Activated CD4-positive, alpha-beta memory T cell treated with anti-CD3 and anti-CD28 coated beads, Interleukin-2, amount 10 ng/mL, durations not matched to agents 7 days and 5 days (primary cell): ENCODE measurements at regions of chr10 and their contacts with region 1.

Region 1: GRCh38 chr10:128125944-128126764 is at the start of gene MKI67:
- DNase-seq: peak; percentile 94
- H3K4me3 Mint-ChIP-seq: peak within 1 kb of the TSS; percentile 99
- H3K27ac Mint-ChIP-seq: peak within 1 kb of the TSS; percentile 94
- H3K4me1 Mint-ChIP-seq: peaks cover 40% of the 10 kb centered on the region
- H3K27me3 Mint-ChIP-seq: peaks cover 11% of the 10 kb centered on the region
- total RNA-seq, gene MKI67: 253 to 272 TPM

Region 2: GRCh38 chr10:128047351-128047750 is 78.8 kb before region 1 on chr10:
- CTCF ChIA-PET with region 1: no interaction called
- POLR2A ChIA-PET with region 1: interaction called, 36 read pairs
- DNase-seq: peak; percentile 89
- H3K4me3 Mint-ChIP-seq: peak overlapping the region; percentile 93
- H3K27ac Mint-ChIP-seq: peak overlapping the region; percentile 100
- H3K4me1 Mint-ChIP-seq: peaks cover 63% of the 10 kb centered on the region
- H3K27me3 Mint-ChIP-seq: no peaks in the 10 kb centered on the region

Region 3: GRCh38 chr10:128095027-128095752 is 31.0 kb before region 1 on chr10:
- CTCF ChIA-PET with region 1: interaction called, 3 read pairs
- POLR2A ChIA-PET with region 1: interaction called, 41 read pairs
- DNase-seq: peak; percentile 65
- H3K4me3 Mint-ChIP-seq: peak overlapping the region; percentile 24
- H3K27ac Mint-ChIP-seq: peak overlapping the region; percentile 84
- H3K4me1 Mint-ChIP-seq: peaks cover 44% of the 10 kb centered on the region
- H3K27me3 Mint-ChIP-seq: no peaks in the 10 kb centered on the region

Region 4: DNA sequence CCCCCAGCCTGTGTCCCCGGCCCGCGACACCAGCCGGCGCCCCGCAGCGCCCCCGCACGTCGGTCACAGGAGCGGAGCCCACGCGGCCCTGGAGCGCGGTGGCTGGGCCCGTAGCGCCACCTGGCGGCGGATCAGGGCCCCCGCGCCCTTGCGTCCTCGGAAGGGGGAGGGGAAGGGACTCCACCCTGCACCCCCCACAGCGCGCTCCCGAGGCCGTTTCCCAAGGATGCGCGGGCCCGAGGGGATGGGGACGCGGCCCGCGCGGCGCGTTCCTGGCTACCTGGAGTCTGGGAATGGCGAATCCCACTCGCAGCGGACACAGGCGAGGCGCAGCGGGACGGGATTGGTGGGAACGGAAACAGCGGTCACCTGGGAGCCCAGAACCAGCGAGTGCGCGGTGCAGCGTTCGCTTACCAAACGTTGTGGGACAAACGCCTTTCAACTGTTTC is 23.9 kb after region 1 on chr10:
- CTCF ChIA-PET with region 1: interaction called, 8 read pairs
- POLR2A ChIA-PET with region 1: interaction called, 19 read pairs
- DNase-seq: peak; percentile 80
- H3K4me3 Mint-ChIP-seq: peak overlapping the region; percentile 67
- H3K27ac Mint-ChIP-seq: no peak overlapping the region
- H3K4me1 Mint-ChIP-seq: peaks cover 26% of the 10 kb centered on the region
- H3K27me3 Mint-ChIP-seq: peaks cover 34% of the 10 kb centered on the region

Region 5: DNA sequence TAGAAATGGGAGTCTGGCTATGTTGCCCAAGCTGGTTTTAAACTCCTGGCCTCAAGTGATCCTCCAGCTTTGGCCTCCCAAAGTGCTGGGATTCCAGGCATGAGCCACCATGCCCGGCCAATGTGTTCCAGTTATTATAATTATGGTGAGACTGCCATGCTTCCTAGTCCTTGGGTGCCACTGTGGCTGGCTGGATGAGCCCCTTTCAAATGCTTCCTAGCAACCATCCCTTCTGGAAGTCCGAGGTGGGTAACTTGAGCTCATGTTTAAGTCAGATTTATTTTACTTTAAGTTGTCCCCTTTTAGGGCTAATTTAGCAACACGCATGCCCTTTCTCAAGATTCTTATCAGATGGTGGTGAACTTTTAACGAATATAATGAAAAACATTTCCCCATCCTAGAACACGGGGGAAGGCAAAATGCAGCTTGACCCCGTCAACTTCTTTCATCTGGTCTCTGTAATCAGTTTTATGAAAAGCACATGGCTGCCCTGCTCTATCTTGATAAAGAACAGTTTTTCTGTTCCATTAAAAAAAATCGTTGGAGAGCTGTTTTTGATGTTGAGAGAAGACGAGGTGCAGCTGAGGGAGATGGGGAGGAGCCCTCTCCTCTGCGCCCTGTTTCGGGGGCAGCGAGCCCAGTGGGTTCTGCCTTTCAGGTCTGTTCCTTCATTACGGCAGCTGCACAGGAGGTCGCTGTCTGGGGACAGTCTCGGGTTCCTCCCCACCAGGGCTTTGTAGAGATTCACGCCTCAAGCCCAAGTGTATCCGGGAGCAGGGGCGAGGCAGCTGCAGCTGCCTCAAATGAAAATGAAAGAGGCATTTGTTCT is 61.0 kb after region 1 on chr10:
- CTCF ChIA-PET with region 1: no interaction called
- POLR2A ChIA-PET with region 1: interaction called, 16 read pairs
- DNase-seq: peak; percentile 52
- H3K4me3 Mint-ChIP-seq: peak overlapping the region; percentile 58
- H3K27ac Mint-ChIP-seq: peak overlapping the region; percentile 61
- H3K4me1 Mint-ChIP-seq: peaks cover 44% of the 10 kb centered on the region
- H3K27me3 Mint-ChIP-seq: peaks cover 8% of the 10 kb centered on the region